Right cardiac atrium (tissue), 5 donors: ENCODE measurements at regions of chr20 and their contacts with region 1.

Region 1: DNA sequence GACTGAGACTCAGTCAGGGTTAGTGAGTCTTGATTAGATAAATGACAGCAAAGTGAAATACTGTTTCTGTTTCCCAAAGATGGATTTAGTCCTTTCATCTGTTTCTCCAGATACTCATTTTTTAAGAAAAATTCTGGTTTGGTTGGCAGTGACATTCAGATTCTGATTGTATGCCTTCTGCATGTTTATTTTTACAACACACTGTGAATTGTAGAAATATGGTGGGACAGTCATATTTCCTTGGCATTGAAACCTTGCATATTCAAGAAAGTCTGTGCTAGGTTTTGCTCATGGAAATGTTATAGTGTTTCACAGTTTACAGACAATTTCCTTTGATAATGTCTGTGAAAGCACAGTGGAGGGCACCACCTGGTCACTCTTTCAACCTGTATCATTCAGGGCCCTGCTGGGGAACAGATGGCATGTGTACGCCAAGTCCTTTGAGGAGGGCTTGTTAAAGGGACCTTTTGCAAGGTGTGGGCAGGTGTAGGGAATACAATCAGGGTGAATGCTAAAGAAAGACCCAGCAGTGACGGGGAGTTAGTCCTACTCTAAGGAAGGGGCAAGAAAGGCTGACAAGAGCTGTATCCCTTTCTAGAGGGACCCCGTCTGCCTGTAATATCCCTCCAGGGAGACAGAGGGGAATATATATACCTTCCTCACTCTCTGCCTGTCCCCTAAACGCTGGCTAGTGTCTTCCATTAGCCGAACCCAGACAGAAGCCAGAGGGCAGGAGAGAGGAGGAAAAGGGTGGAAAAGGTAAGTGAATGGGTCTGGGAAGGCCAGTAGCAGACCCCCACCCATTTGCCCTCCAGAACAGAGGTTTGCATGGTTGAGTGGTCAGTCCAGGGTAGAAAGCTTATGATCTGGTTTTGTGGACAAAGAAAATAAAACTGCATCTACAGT is 10.2 kb downstream of the PLCB4 start:
- DNase-seq: no peak
- ATAC-seq: no peak
- H3K4me3 ChIP-seq: no peak overlapping the region
- H3K27ac ChIP-seq: no peak overlapping the region
- H3K4me1 ChIP-seq: peaks cover 9% of the 10 kb centered on the region
- H3K27me3 ChIP-seq: no peaks in the 10 kb centered on the region

Region 2: GRCh38 chr20:9353180-9353915 is 274.3 kb after region 1 on chr20:
- intact Hi-C with region 1: loop called in 1 of 4 experiments (anchors 5 kb)
- DNase-seq: no peak
- ATAC-seq: peak; percentile 40 to 70
- H3K4me3 ChIP-seq: no peak overlapping the region
- H3K27ac ChIP-seq: no peak overlapping the region
- H3K4me1 ChIP-seq: no peaks in the 10 kb centered on the region
- H3K27me3 ChIP-seq: no peaks in the 10 kb centered on the region